HepG2 (cell line): ENCODE measurements at regions of chr1 and their contacts with region 1.

Region 1: GRCh38 chr1:15526490-15527339 is at the start of gene DNAJC16:
- DNase-seq: peak; percentile 100
- ATAC-seq: peak; percentile 83
- H3K4me3 ChIP-seq: peak within 1 kb of the TSS; percentile 69 to 96 (median 89)
- H3K27ac ChIP-seq: peak within 1 kb of the TSS; percentile 91
- H3K4me1 ChIP-seq: peaks cover 36% of the 10 kb centered on the region
- H3K27me3 ChIP-seq: no peaks in the 10 kb centered on the region; a peak in 1 of 5 replicates
- CTCF ChIP-seq: peak; percentile 65
- EP300 ChIP-seq: no peak
- POLR2A ChIP-seq: peak; percentile 81 to 85
- RAD21 ChIP-seq: no peak; the same call in 1 of the 2 replicates
- total RNA-seq, gene DNAJC16: 10.7 and 15.4 TPM in 2 replicates

Region 2: DNA sequence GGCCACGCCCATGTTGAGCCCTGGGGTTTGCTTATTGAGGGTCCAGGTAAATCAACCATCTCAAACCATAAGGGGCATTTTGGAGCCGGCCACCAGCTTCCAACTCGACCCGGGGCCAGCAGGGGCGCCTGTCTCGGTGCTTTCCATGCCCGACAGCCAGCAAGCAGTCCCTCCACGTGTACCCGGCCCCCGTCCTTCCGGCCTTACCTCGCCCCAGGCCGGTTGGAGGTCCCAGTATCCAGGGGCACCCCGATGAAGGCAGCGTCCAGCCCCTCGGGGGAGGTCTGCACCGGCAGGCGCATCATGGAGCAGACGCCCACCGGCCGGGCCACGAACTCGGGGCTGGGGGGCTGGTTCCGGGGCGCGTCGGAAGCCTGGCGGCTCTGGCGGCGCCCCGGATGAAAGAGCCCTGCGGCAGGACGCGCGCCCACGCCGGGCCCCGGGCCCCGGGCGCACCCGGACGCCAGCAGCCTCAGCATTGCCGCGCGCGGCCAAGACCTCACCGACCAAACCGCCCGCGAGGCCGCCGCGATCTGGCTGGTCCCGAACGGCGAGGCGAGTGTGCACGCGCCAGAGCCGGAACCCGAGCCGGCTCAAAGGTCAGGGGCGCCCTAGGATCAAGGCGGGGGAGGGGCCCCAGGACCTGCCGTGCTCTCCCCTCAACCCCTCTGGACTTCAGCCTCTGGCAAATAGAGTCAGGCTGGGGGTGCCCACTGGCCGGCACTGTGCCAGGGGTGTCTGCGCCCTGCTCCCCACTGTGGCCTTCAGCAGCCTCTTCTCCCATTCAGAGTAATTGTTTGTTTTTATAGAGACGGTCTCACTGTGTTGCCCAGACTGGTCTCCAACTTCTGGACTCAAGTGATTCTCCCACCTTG is 58.0 kb after region 1 on chr1 and contains the start of gene AGMAT:
- CTCF ChIA-PET with region 1: no interaction called
- POLR2A ChIA-PET with region 1: interaction called, 10 read pairs
- in situ Hi-C with region 1: no loop called
- intact Hi-C with region 1: no loop called
- DNase-seq: peak; percentile 91
- ATAC-seq: peak; percentile 93
- H3K4me3 ChIP-seq: peak within 1 kb of the TSS; percentile 72 to 85 (median 84)
- H3K27ac ChIP-seq: peak within 1 kb of the TSS; percentile 100
- H3K4me1 ChIP-seq: peaks cover 47% of the 10 kb centered on the region
- H3K27me3 ChIP-seq: no peaks in the 10 kb centered on the region
- CTCF ChIP-seq: peak; percentile 63
- EP300 ChIP-seq: peak; percentile 80 to 84
- POLR2A ChIP-seq: peak; percentile 88 to 93
- RAD21 ChIP-seq: no peak; the same call in 1 of the 2 replicates
- total RNA-seq, gene AGMAT: 174 and 216 TPM in 2 replicates